ENCODE measurements at regions of chr4 and their contacts with region 1.

Region 1: GRCh38 chr4:158845311-158846041 is 76.7 kb downstream of the FNIP2 start:
- DNase-seq: no peak
- H3K4me3 ChIP-seq: no peak overlapping the region
- H3K27ac ChIP-seq: no peak overlapping the region
- H3K4me1 ChIP-seq: no peaks in the 10 kb centered on the region
- H3K27me3 ChIP-seq: no peaks in the 10 kb centered on the region
- CTCF ChIP-seq: no peak
- POLR2A ChIP-seq: no peak

Region 2: GRCh38 chr4:158729716-158730559 is 115.5 kb before region 1 on chr4:
- intact Hi-C with region 1: loop called (anchors 5 kb)
- DNase-seq: peak; percentile 50 to 53
- H3K4me3 ChIP-seq: no peak overlapping the region
- H3K27ac ChIP-seq: no peak overlapping the region
- H3K4me1 ChIP-seq: no peaks in the 10 kb centered on the region
- H3K27me3 ChIP-seq: no peaks in the 10 kb centered on the region
- CTCF ChIP-seq: peak; percentile 82 to 94 (median 82)
- POLR2A ChIP-seq: no peak

Region 3: DNA sequence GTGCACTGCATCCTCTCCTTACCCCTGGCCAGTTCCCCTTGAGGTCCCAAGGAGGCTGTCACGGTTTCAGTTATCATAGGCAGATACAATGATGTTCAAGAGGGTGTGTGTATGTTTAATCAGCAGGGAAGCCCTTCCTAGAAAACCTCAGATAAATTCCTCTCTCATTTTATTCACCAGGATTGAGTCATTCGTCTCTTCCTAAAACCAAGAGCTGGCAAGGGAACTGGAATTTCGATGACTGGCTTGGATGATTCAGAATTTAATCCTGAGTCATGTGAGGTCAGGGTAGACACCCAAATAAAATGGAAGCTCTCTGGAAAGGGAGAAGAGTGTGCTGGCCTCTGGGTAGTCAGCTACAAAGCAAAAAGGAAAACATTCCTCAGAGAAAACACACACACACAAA is 151.2 kb after region 1 on chr4:
- intact Hi-C with region 1: no loop called
- DNase-seq: no peak
- H3K4me3 ChIP-seq: no peak overlapping the region
- H3K27ac ChIP-seq: no peak overlapping the region
- H3K4me1 ChIP-seq: no peaks in the 10 kb centered on the region
- H3K27me3 ChIP-seq: no peaks in the 10 kb centered on the region
- CTCF ChIP-seq: no peak
- POLR2A ChIP-seq: no peak

Measured in uterus (tissue), 4 donors.